GM18951 (cell line): ENCODE measurements at regions of chr16 and their contacts with region 1.

Region 1: GRCh38 chr16:15777533-15778203 is 79.2 kb downstream of the MYH11 start:
- POLR2A ChIP-seq: no peak

Region 2: GRCh38 chr16:16127469-16128116 is 349.9 kb after region 1 on chr16:
- in situ Hi-C with region 1: loop called (anchors 10 kb)
- POLR2A ChIP-seq: no peak